Activated naive CD4-positive, alpha-beta T cell treated with anti-CD3 and anti-CD28 coated beads, Interleukin-2, amount 10 ng/mL, durations not matched to agents 7 days and 5 days (primary cell): ENCODE measurements at regions of chr17 and their contacts with region 1.

Region 1: GRCh38 chr17:28951991-28952975 is 965 bp upstream of the PHF12 start:
- DNase-seq: peak; percentile 98
- H3K4me3 Mint-ChIP-seq: no peak overlapping the region
- H3K27ac Mint-ChIP-seq: no peak overlapping the region
- H3K4me1 Mint-ChIP-seq: peaks cover 18% of the 10 kb centered on the region
- H3K27me3 Mint-ChIP-seq: peaks cover 3% of the 10 kb centered on the region

Region 2: GRCh38 chr17:28443901-28444638 is 508.2 kb before region 1 on chr17:
- CTCF ChIA-PET with region 1: no interaction called
- DNase-seq: no peak
- H3K4me3 Mint-ChIP-seq: no peak overlapping the region
- H3K27ac Mint-ChIP-seq: no peak overlapping the region
- H3K4me1 Mint-ChIP-seq: no peaks in the 10 kb centered on the region
- H3K27me3 Mint-ChIP-seq: peaks cover 18% of the 10 kb centered on the region

Region 3: GRCh38 chr17:28717578-28718333 is 234.5 kb before region 1 on chr17 and contains the start of gene RAB34:
- CTCF ChIA-PET with region 1: interaction called, 11 read pairs
- DNase-seq: peak; percentile 48
- H3K4me3 Mint-ChIP-seq: peak within 1 kb of the TSS; percentile 68
- H3K27ac Mint-ChIP-seq: peak within 1 kb of the TSS; percentile 24
- H3K4me1 Mint-ChIP-seq: peaks cover 45% of the 10 kb centered on the region
- H3K27me3 Mint-ChIP-seq: peaks cover 57% of the 10 kb centered on the region

Region 4: GRCh38 chr17:28967221-28968140 is 15.2 kb after region 1 on chr17:
- CTCF ChIA-PET with region 1: interaction called, 13 read pairs
- DNase-seq: no peak
- H3K4me3 Mint-ChIP-seq: no peak overlapping the region
- H3K27ac Mint-ChIP-seq: no peak overlapping the region
- H3K4me1 Mint-ChIP-seq: no peaks in the 10 kb centered on the region
- H3K27me3 Mint-ChIP-seq: peaks cover 51% of the 10 kb centered on the region

Region 5: DNA sequence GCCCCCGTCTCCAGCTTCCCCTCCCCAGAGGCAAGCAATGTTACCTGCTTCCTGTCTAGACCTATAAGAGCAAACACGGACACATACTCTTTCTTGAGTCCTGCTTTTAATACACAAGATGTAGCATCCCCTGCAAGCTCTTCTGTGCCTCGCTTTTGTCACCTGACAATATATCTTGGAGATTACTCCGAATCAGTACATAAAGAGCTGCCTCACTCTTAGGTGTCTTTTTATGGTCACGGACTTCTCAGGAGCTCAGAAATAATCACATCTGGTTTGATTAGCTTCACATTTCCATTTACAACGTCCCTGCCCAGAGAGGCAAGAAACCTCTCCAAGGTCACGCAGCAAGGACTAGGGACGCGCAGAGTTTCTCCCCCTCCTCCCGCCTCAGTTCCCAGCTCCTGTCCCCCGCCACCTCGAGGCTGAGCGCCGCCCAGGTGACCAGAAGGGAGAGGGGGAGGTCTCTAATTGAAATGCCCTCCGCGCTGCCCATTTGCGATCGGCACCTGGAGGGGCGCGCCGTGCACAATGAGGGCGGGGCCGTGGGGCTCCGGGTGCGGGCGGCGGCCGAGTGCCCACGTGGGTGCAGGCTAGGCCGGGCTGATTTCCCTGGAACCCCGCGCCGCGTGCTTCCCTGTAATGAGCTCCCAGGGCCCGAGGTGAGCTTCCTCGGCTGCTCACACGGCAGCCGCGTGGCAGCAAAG is 67.3 kb after region 1 on chr17:
- CTCF ChIA-PET with region 1: no interaction called
- DNase-seq: no peak
- H3K4me3 Mint-ChIP-seq: no peak overlapping the region
- H3K27ac Mint-ChIP-seq: no peak overlapping the region
- H3K4me1 Mint-ChIP-seq: peaks cover 5% of the 10 kb centered on the region
- H3K27me3 Mint-ChIP-seq: peaks cover 85% of the 10 kb centered on the region